ENCODE measurements at regions of chr22 and their contacts with region 1.

Region 1: GRCh38 chr22:22692707-22693530 is 48.5 kb downstream of the GGTLC2 start:
- DNase-seq: peak; percentile 54
- H3K4me3 ChIP-seq: no peak overlapping the region
- H3K27ac ChIP-seq: no peak overlapping the region
- H3K4me1 ChIP-seq: no peaks in the 10 kb centered on the region
- H3K27me3 ChIP-seq: no peaks in the 10 kb centered on the region
- CTCF ChIP-seq: peak; percentile 47
- EP300 ChIP-seq: no peak
- RAD21 ChIP-seq: no peak

Region 2: GRCh38 chr22:22110548-22111266 is 582.2 kb before region 1 on chr22:
- CTCF ChIA-PET with region 1: no interaction called
- POLR2A ChIA-PET with region 1: no interaction called
- DNase-seq: peak; percentile 76
- H3K4me3 ChIP-seq: no peak overlapping the region
- H3K27ac ChIP-seq: peak overlapping the region in 1 of 2 experiments; percentile 53; a peak in 2 of 4 replicates
- H3K4me1 ChIP-seq: no peaks in the 10 kb centered on the region
- H3K27me3 ChIP-seq: no peaks in the 10 kb centered on the region
- CTCF ChIP-seq: peak; percentile 63
- EP300 ChIP-seq: no peak
- RAD21 ChIP-seq: peak; percentile 48

Region 3: GRCh38 chr22:22710719-22711531 is 18.0 kb after region 1 on chr22:
- CTCF ChIA-PET with region 1: interaction called, 18 read pairs
- POLR2A ChIA-PET with region 1: no interaction called
- DNase-seq: peak; percentile 75
- H3K4me3 ChIP-seq: peak overlapping the region in 1 of 2 experiments; percentile 9; a peak in 1 of 4 replicates
- H3K27ac ChIP-seq: no peak overlapping the region
- H3K4me1 ChIP-seq: no peaks in the 10 kb centered on the region
- H3K27me3 ChIP-seq: no peaks in the 10 kb centered on the region; the same call in 1 of the 2 replicates
- CTCF ChIP-seq: peak; percentile 91
- EP300 ChIP-seq: no peak
- RAD21 ChIP-seq: peak; percentile 36

Region 4: DNA sequence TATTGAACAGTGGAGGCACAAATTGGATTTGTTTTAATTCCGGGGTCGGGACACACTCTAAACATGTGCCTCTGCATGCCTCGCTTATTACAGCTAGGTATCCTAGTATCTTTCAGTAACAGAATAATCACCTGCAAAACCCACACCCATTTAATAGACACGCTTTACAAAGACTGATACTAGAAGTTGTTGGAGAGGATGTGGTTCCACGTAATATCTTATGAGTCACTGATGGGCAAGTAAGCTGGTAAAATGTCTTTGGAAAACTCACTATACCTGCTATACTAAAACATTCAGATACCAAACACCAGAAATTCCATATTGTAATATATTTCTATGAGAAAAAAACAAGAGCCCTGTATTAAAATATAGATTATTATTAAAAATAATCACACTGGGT is 35.5 kb after region 1 on chr22:
- CTCF ChIA-PET with region 1: no interaction called
- POLR2A ChIA-PET with region 1: no interaction called
- DNase-seq: no peak
- H3K4me3 ChIP-seq: no peak overlapping the region
- H3K27ac ChIP-seq: no peak overlapping the region
- H3K4me1 ChIP-seq: no peaks in the 10 kb centered on the region
- H3K27me3 ChIP-seq: no peaks in the 10 kb centered on the region; the same call in 1 of the 2 replicates
- CTCF ChIP-seq: no peak
- EP300 ChIP-seq: no peak
- RAD21 ChIP-seq: no peak

Measured in SK-N-SH (cell line).